AG04450 (cell line): ENCODE measurements at regions of chr2 and their contacts with region 1.

Region 1: GRCh38 chr2:119641562-119642258 is 37.3 kb upstream of the TMEM177 start:
- DNase-seq: peak; percentile 37
- H3K4me3 ChIP-seq: no peak overlapping the region
- H3K27ac ChIP-seq: no peak overlapping the region
- H3K27me3 ChIP-seq: peaks cover 15% of the 10 kb centered on the region
- CTCF ChIP-seq: peak; percentile 98

Region 2: DNA sequence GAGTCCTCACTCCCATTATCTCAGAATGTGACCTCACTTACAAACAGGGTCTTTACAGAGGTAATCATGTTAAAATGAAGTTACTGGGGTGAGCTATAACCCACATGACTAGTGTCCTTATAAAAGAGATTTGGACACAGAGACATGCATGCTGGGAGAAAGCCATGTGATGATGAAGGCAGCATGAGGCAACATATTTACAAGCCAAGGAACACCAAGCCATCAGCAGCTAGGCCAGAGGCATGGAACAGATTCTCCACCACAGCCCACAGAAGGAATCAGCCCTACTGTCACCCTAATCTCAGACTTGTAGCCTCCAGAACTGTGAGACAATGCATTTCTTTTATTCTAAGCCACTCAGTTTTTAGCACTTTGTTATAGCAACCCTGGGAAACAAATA is 966.2 kb before region 1 on chr2:
- CTCF ChIA-PET with region 1: interaction called, 10 read pairs
- POLR2A ChIA-PET with region 1: no interaction called
- DNase-seq: no peak
- H3K4me3 ChIP-seq: no peak overlapping the region
- H3K27ac ChIP-seq: no peak overlapping the region
- H3K27me3 ChIP-seq: no peaks in the 10 kb centered on the region
- CTCF ChIP-seq: no peak

Region 3: GRCh38 chr2:119659601-119660342 is 18.1 kb after region 1 on chr2:
- CTCF ChIA-PET with region 1: interaction called, 52 read pairs
- POLR2A ChIA-PET with region 1: no interaction called
- DNase-seq: no peak
- H3K4me3 ChIP-seq: no peak overlapping the region
- H3K27ac ChIP-seq: no peak overlapping the region
- H3K27me3 ChIP-seq: peaks cover 13% of the 10 kb centered on the region
- CTCF ChIP-seq: peak; percentile 91

Region 4: GRCh38 chr2:119841550-119841949 is 199.8 kb after region 1 on chr2:
- CTCF ChIA-PET with region 1: interaction called, 10 read pairs
- POLR2A ChIA-PET with region 1: no interaction called
- DNase-seq: no peak
- H3K4me3 ChIP-seq: no peak overlapping the region
- H3K27ac ChIP-seq: no peak overlapping the region
- H3K27me3 ChIP-seq: no peaks in the 10 kb centered on the region
- CTCF ChIP-seq: no peak